SK-N-SH (cell line): ENCODE measurements at regions of chr19 and their contacts with region 1.

Region 1: GRCh38 chr19:16587833-16588823 is 15.9 kb upstream of the SLC35E1 start:
- DNase-seq: peak; percentile 68
- H3K4me3 ChIP-seq: peak overlapping the region in 1 of 2 experiments; percentile 19; a peak in 1 of 4 replicates
- H3K27ac ChIP-seq: peak overlapping the region in 1 of 2 experiments; percentile 77; a peak in 2 of 4 replicates
- H3K4me1 ChIP-seq: peaks cover 48 to 85% of the 10 kb centered on the region in 2 experiments
- H3K27me3 ChIP-seq: no peaks in the 10 kb centered on the region
- CTCF ChIP-seq: no peak
- EP300 ChIP-seq: no peak
- RAD21 ChIP-seq: peak; percentile 31; the same call in 1 of the 2 replicates

Region 2: GRCh38 chr19:16572332-16573211 is 15.6 kb before region 1 on chr19 and contains the start of gene SLC35E1:
- CTCF ChIA-PET with region 1: interaction called, 7 read pairs
- POLR2A ChIA-PET with region 1: interaction called, 10 read pairs
- DNase-seq: peak; percentile 100
- H3K4me3 ChIP-seq: peak within 1 kb of the TSS; percentile 85 to 96
- H3K27ac ChIP-seq: peak within 1 kb of the TSS; percentile 75 to 80
- H3K4me1 ChIP-seq: peaks cover 10 to 30% of the 10 kb centered on the region in 2 experiments; a peak in 3 of 4 replicates
- H3K27me3 ChIP-seq: no peaks in the 10 kb centered on the region
- CTCF ChIP-seq: no peak
- EP300 ChIP-seq: peak in 1 of 2 experiments; percentile 9; a peak in 1 of 4 replicates
- RAD21 ChIP-seq: no peak
- polyA plus RNA-seq, gene SLC35E1: 23.5 and 28.4 TPM in 2 replicates

Region 3: DNA sequence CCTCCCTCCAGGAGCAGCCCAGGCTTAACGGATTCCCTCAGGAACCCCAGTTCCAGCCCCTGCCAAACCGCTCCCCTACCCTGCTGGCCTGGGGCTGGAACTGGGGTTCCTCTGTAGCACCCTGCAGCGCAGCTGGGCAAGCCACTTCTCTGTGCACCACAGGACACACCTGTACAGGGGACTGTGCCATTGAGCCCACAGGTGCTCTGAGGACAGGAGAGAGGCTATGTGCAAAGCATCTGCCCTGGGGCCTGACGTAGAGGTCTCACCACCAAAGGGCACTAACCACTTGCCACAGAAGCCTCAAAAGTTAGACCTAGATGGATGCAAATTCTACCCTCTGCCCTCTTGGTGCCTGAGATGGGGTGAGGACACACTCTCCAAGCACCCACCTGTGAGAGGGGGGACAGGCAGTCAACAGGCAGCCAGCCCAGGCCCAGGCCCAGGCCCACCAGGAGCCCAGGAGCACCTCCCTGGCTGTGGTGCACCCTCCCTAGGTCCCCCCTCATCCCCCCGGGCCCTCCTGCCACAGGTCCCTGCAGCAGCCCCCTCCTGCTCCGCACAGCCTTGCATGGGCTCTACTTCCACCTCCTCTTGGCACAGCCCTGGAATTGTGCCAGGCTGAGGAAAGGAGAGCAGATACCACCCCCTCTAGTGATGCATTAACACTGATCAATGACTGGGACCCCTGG is 11.7 kb after region 1 on chr19:
- CTCF ChIA-PET with region 1: interaction called, 12 read pairs
- POLR2A ChIA-PET with region 1: interaction called, 5 read pairs
- DNase-seq: peak; percentile 52
- H3K4me3 ChIP-seq: no peak overlapping the region
- H3K27ac ChIP-seq: peak overlapping the region in 1 of 2 experiments; percentile 77; a peak in 2 of 4 replicates
- H3K4me1 ChIP-seq: peaks cover 0 to 36% of the 10 kb centered on the region in 2 experiments; a peak in 2 of 4 replicates
- H3K27me3 ChIP-seq: no peaks in the 10 kb centered on the region
- CTCF ChIP-seq: no peak
- EP300 ChIP-seq: no peak
- RAD21 ChIP-seq: no peak